ENCODE measurements at regions of chr11 and their contacts with region 1.

Region 1: GRCh38 chr11:59542142-59542810 is 30.9 kb downstream of the OR4D9 start:
- DNase-seq: no peak
- H3K4me3 ChIP-seq: no peak overlapping the region
- H3K4me3 Mint-ChIP-seq: no peak overlapping the region
- H3K27ac ChIP-seq: no peak overlapping the region
- H3K27ac Mint-ChIP-seq: no peak overlapping the region
- H3K4me1 ChIP-seq: no peaks in the 10 kb centered on the region
- H3K4me1 Mint-ChIP-seq: peaks cover 1 to 7% (median 7%) of the 10 kb centered on the region in 3 donors
- H3K27me3 ChIP-seq: no peaks in the 10 kb centered on the region
- H3K27me3 Mint-ChIP-seq: peaks cover 2 to 3% of the 10 kb centered on the region in 2 donors

Region 2: GRCh38 chr11:59668950-59669610 is 126.8 kb after region 1 on chr11 and contains the start of gene PATL1:
- CTCF ChIA-PET with region 1: interaction called, 5 read pairs
- POLR2A ChIA-PET with region 1: interaction called, 15 read pairs
- DNase-seq: peak; percentile 99 to 100 (median 99)
- H3K4me3 ChIP-seq: peak within 1 kb of the TSS; percentile 73
- H3K4me3 Mint-ChIP-seq: peak within 1 kb of the TSS; percentile 96 to 99 (median 98)
- H3K27ac ChIP-seq: peak within 1 kb of the TSS; percentile 97
- H3K27ac Mint-ChIP-seq: peak within 1 kb of the TSS; percentile 99 to 100 (median 100)
- H3K4me1 ChIP-seq: peaks cover 23% of the 10 kb centered on the region
- H3K4me1 Mint-ChIP-seq: peaks cover 33 to 52% (median 47%) of the 10 kb centered on the region in 3 donors
- H3K27me3 ChIP-seq: no peaks in the 10 kb centered on the region
- H3K27me3 Mint-ChIP-seq: no peaks in the 10 kb centered on the region
- total RNA-seq, gene PATL1: 61.3 to 65.8 TPM

Region 3: DNA sequence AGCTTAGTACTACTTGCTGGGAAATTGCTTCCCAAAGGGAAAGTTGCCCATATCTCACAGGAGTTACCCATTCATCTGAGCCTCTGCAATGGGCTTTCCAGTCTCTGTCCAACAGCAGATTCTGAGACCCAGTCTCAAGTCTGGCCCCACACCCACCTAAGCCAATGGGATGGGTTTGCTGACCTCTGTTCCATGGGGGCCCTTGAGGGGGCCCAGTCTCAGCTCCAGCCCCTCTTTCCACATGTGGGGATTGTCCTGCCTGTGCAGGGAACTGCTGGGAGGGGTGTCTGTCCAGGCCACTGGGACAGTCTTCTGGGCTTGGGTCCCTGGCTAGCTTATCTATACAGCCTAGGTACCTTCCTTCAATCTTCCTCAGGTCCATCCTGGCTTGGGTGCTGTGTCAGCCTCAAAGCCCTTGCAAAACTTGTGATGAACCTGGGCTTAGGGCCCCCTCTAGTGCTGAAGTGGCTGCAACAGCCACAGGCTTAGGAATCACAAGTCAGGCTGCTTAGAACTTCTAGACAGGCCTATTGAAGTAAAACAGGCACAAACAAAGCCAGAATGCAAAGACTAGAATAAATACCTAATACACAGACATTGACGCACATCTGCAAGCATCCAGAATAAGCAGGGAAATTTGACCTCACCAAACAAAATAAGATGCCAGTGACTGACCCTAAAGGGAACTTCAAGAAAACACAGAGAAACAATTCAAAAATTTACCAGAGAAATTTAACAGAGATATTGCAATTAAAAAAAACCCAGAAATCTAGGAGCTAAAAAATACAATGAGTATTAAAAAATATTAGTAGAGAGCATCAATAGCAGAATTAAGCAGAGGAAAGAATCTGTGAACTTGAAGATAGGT is 138.2 kb after region 1 on chr11:
- CTCF ChIA-PET with region 1: interaction called, 19 read pairs
- POLR2A ChIA-PET with region 1: no interaction called
- DNase-seq: peak; percentile 20 to 66 (median 44)
- H3K4me3 ChIP-seq: no peak overlapping the region
- H3K4me3 Mint-ChIP-seq: no peak overlapping the region
- H3K27ac ChIP-seq: no peak overlapping the region
- H3K27ac Mint-ChIP-seq: no peak overlapping the region
- H3K4me1 ChIP-seq: no peaks in the 10 kb centered on the region
- H3K4me1 Mint-ChIP-seq: no peaks in the 10 kb centered on the region
- H3K27me3 ChIP-seq: peaks cover 4% of the 10 kb centered on the region
- H3K27me3 Mint-ChIP-seq: peaks cover 16 to 47% of the 10 kb centered on the region in 2 donors

Measured in CD8-positive, alpha-beta memory T cell (primary cell).